Common myeloid progenitor, CD34-positive (primary cell): ENCODE measurements at regions of chr3 and their contacts with region 1.

Region 1: GRCh38 chr3:69161587-69162307 is 39.4 kb upstream of the LMOD3 start:
- DNase-seq: peak; percentile 49 to 73 (median 65)
- H3K4me3 ChIP-seq: no peak overlapping the region
- H3K27ac ChIP-seq: no peak overlapping the region
- H3K4me1 ChIP-seq: no peaks in the 10 kb centered on the region
- H3K27me3 ChIP-seq: no peaks in the 10 kb centered on the region

Region 2: GRCh38 chr3:69174871-69175737 is 13.4 kb after region 1 on chr3:
- CTCF ChIA-PET with region 1: interaction called, 21 read pairs
- POLR2A ChIA-PET with region 1: no interaction called
- DNase-seq: no peak
- H3K4me3 ChIP-seq: no peak overlapping the region
- H3K27ac ChIP-seq: no peak overlapping the region
- H3K4me1 ChIP-seq: no peaks in the 10 kb centered on the region
- H3K27me3 ChIP-seq: no peaks in the 10 kb centered on the region

Region 3: GRCh38 chr3:69306239-69307185 is 144.8 kb after region 1 on chr3:
- CTCF ChIA-PET with region 1: interaction called, 84 read pairs
- POLR2A ChIA-PET with region 1: no interaction called
- DNase-seq: peak; percentile 73 to 87 (median 85)
- H3K4me3 ChIP-seq: no peak overlapping the region
- H3K27ac ChIP-seq: no peak overlapping the region
- H3K4me1 ChIP-seq: peaks cover 0 to 3% (median 0%) of the 10 kb centered on the region in 4 experiments
- H3K27me3 ChIP-seq: no peaks in the 10 kb centered on the region

Region 4: GRCh38 chr3:69671082-69671952 is 509.6 kb after region 1 on chr3:
- CTCF ChIA-PET with region 1: interaction called, 17 read pairs
- POLR2A ChIA-PET with region 1: no interaction called
- DNase-seq: peak; percentile 31 to 64 (median 48)
- H3K4me3 ChIP-seq: no peak overlapping the region
- H3K27ac ChIP-seq: no peak overlapping the region
- H3K4me1 ChIP-seq: peaks cover 0 to 2% (median 0%) of the 10 kb centered on the region in 4 experiments
- H3K27me3 ChIP-seq: no peaks in the 10 kb centered on the region